AG04450 (cell line): ENCODE measurements at regions of chr2 and their contacts with region 1.

Region 1: GRCh38 chr2:209334198-209335017 is 89.4 kb upstream of the MAP2 start:
- DNase-seq: peak; percentile 13
- H3K4me3 ChIP-seq: no peak overlapping the region
- H3K27ac ChIP-seq: no peak overlapping the region
- H3K27me3 ChIP-seq: no peaks in the 10 kb centered on the region
- CTCF ChIP-seq: peak; percentile 93

Region 2: GRCh38 chr2:208392300-208393080 is 941.9 kb before region 1 on chr2:
- CTCF ChIA-PET with region 1: interaction called, 18 read pairs
- POLR2A ChIA-PET with region 1: no interaction called
- DNase-seq: no peak
- H3K4me3 ChIP-seq: no peak overlapping the region
- H3K27ac ChIP-seq: no peak overlapping the region
- H3K27me3 ChIP-seq: no peaks in the 10 kb centered on the region
- CTCF ChIP-seq: peak; percentile 34

Region 3: DNA sequence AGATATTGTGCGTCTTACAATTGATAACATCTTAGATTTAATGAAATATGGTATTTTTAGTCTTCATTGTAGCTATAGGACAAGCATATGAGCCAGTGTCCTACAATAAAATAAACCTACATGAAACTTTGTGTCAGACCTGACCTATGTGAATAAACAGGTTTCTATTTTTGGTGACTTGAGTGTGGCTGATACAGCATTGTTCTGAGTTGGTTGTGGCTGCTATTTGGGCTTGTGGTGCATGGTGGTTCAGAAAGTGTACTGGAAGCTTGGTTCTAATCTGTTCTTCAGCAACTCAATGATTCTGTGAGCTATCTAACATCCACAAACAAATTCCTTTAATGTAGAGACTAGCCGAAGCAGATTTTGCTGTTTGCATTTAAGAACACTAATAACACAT is 24.6 kb after region 1 on chr2:
- CTCF ChIA-PET with region 1: interaction called, 14 read pairs
- POLR2A ChIA-PET with region 1: no interaction called
- DNase-seq: no peak
- H3K4me3 ChIP-seq: no peak overlapping the region
- H3K27ac ChIP-seq: no peak overlapping the region
- H3K27me3 ChIP-seq: no peaks in the 10 kb centered on the region
- CTCF ChIP-seq: no peak

Region 4: GRCh38 chr2:209423562-209424198 is 89.3 kb after region 1 on chr2 and contains the start of gene MAP2:
- CTCF ChIA-PET with region 1: interaction called, 59 read pairs
- POLR2A ChIA-PET with region 1: no interaction called
- DNase-seq: peak; percentile 11
- H3K4me3 ChIP-seq: peak within 1 kb of the TSS; percentile 72
- H3K27ac ChIP-seq: no peak within 1 kb of the TSS
- H3K27me3 ChIP-seq: no peaks in the 10 kb centered on the region
- CTCF ChIP-seq: peak; percentile 71
- polyA plus RNA-seq, gene MAP2: 0.69 and 1.1 TPM in 2 replicates

Region 5: DNA sequence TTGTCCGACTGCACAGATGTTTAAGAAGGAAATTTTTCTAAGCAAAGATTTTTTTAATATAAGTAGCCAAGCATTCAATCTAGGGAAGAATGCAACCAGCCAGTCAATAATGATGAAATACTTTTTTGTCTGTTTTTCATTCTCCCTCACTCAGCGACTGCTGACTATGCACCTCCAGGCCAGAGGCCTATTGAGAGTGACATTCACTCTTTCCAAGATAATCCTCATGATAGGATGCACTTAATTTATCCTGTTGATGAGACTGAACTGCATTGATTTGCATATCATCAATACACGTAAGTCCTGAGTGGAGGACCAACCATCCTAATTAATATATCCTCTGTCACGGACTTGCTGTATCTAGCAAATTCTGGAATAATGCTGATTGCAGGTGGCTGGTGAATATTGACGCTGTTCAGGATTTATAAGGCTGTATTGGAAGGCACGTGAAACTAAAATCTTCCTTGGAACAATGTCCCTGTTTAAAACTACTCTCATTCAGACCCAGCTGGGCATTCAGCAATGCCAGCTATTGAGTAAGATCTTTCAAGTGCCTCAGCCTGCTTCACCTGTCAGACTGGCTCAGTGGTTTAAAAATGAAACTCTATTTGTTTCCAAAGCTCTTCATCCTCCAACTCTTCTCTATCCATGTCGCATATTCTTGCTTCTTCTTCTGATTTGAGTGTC is 231.6 kb after region 1 on chr2:
- CTCF ChIA-PET with region 1: interaction called, 22 read pairs
- POLR2A ChIA-PET with region 1: no interaction called
- DNase-seq: no peak
- H3K4me3 ChIP-seq: no peak overlapping the region
- H3K27ac ChIP-seq: no peak overlapping the region
- H3K27me3 ChIP-seq: no peaks in the 10 kb centered on the region
- CTCF ChIP-seq: no peak

Region 6: DNA sequence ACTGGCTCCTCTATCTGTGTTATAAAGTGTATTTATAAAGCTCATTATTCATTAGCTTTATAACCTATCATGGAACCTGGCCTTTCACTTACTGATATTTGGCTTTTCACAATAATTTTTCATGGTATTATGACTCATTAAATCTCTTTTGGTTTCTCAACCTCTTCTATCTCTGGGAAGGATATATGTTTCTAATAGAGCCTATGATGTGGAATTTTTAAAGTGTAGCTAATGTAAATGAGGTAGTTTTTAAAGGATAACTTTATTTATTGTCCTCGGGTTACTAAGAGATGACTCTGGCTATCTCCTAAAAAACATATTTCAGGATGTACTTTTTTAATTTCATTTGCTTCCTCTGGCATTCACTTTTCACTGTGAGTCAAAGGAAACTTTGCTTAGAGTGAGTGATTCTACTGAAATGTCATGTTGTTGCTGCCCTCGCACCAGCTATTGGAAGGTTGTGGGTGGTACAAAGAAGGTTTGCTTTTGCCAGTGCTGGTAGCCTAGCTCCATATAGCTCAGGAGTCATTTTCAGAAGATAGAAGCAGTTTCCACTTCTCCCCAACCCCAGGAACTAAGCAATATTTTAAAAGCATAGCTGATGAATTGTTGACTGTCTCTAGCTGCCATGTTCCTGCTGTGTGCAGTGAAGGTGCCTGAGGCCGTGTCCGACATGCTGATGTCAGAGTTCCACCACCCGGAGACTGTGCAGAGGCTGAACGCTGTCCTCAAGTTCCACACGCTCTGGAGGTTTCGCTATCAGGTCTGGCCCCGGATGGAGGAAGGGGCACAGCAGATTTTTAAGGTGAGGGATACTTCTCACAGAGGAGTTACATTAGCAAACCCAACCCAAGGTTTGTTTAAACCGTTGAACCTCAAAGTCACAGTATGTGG is 583.0 kb after region 1 on chr2:
- CTCF ChIA-PET with region 1: no interaction called
- POLR2A ChIA-PET with region 1: no interaction called
- DNase-seq: no peak
- H3K4me3 ChIP-seq: no peak overlapping the region
- H3K27ac ChIP-seq: no peak overlapping the region
- H3K27me3 ChIP-seq: no peaks in the 10 kb centered on the region
- CTCF ChIP-seq: no peak

Region 7: DNA sequence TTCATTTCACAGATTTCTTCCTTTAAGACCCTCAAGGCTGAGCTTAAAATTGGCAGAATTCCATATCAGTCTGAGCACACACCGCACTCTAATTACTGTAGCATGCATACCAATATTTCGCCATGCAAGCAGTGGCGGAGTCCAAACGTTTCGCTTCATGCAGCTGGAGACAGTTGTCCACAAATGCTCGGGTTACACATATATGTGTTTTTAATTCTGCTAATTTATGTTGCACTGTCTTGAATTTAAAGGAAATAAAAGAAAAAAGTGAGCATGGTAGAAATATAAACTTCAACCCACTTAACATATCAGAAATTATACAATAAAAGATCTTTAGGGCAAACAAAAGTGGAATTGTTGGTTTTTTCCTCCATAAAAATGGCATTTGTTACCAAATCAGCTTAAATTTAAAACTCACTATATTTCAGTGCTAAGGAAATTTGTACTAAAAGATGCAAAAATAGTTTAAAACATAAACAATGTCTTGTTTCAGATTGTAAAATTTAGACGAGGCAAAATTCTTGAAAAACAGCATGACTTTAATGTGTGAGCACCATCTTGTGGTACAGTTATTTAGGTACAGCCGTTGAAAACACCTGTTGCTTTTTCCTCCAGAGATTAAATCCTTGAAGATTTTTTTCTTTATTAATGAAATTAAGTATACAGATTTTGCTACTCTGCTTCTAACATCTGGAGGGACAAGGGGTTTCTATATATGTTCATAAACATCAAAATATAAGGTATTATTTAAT is 860.9 kb after region 1 on chr2:
- CTCF ChIA-PET with region 1: interaction called, 15 read pairs
- POLR2A ChIA-PET with region 1: interaction called, 3 read pairs
- DNase-seq: no peak
- H3K4me3 ChIP-seq: peak overlapping the region; percentile 14; the same call in 1 of the 2 replicates
- H3K27ac ChIP-seq: no peak overlapping the region
- H3K27me3 ChIP-seq: no peaks in the 10 kb centered on the region
- CTCF ChIP-seq: peak; percentile 64